Activated CD4-positive, alpha-beta memory T cell treated with anti-CD3 and anti-CD28 coated beads, Interleukin-2, amount 10 ng/mL, durations not matched to agents 7 days and 5 days (primary cell): ENCODE measurements at regions of chr16 and their contacts with region 1.

Region 1: DNA sequence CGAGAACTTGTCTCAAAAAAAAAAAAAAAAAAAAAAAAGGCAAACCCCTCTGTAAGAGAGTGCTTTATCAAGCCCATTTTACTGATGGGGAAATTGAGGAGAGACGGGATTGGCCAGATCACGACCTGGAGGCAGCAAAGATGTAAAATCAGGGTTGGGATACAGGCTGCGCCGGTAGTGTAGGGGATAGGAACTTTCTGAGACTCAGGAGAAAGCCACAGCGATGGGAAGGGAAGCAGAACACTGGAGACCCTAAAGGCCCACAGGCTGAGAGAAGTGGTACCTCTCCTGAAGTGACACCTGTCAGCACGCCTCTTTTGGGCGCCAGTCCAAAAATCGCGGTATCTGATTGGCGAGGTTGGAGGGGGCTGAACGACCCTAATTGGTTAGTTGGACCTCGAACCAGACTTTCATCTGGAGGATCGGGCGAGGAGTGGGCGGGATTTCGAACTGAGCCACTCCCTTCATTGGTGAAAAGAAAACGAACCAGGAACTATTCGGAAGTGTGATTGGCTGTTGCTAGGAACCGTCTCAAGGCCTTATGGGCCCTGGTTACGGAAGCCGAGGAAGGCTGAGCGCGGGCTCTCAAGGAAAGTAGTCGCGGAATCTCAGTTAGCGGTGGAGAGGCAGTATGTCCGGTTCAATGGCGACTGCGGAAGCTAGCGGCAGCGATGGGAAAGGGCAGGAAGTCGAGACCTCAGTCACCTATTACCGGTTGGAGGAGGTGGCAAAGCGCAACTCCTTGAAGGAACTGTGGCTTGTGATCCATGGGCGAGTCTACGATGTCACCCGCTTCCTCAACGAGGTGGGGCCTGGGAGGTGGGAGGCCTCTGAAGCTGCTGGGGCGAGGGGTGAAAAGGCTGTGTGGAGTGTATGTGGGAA is at the start of gene CYB5B:
- DNase-seq: peak; percentile 96
- H3K4me3 Mint-ChIP-seq: peak within 1 kb of the TSS; percentile 87
- H3K27ac Mint-ChIP-seq: peak within 1 kb of the TSS; percentile 84
- H3K4me1 Mint-ChIP-seq: peaks cover 40% of the 10 kb centered on the region
- H3K27me3 Mint-ChIP-seq: no peaks in the 10 kb centered on the region
- total RNA-seq, gene CYB5B: 149 to 152 TPM

Region 2: DNA sequence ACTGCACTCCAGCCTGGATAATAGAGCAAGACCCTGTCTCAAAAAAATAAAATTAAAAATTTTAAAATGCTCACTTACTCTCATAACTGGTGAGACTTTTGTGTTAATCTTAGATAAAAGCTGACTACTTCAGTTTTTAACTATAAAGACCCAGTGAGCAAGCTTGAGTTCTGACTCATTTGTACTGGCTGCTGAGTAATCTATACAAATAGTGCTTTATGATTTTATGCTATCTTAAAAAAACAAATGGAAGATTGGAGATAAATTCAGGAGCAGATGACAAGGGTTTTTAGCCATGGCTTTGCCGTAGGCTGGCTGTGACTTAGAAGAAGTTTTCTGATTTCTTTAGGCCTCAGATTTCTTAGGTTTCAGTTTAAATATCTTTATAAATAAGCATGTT is 206.9 kb before region 1 on chr16:
- CTCF ChIA-PET with region 1: no interaction called
- POLR2A ChIA-PET with region 1: no interaction called
- DNase-seq: no peak
- H3K4me3 Mint-ChIP-seq: no peak overlapping the region
- H3K27ac Mint-ChIP-seq: no peak overlapping the region
- H3K4me1 Mint-ChIP-seq: peaks cover 2% of the 10 kb centered on the region
- H3K27me3 Mint-ChIP-seq: no peaks in the 10 kb centered on the region

Region 3: GRCh38 chr16:69330286-69331109 is 93.8 kb before region 1 on chr16 and contains the start of gene PDF:
- CTCF ChIA-PET with region 1: no interaction called
- POLR2A ChIA-PET with region 1: interaction called, 11 read pairs
- DNase-seq: peak; percentile 87
- H3K4me3 Mint-ChIP-seq: peak within 1 kb of the TSS; percentile 80
- H3K27ac Mint-ChIP-seq: peak within 1 kb of the TSS; percentile 78
- H3K4me1 Mint-ChIP-seq: peaks cover 48% of the 10 kb centered on the region
- H3K27me3 Mint-ChIP-seq: no peaks in the 10 kb centered on the region
- total RNA-seq, gene PDF: 8.8 to 9.7 TPM

Region 4: DNA sequence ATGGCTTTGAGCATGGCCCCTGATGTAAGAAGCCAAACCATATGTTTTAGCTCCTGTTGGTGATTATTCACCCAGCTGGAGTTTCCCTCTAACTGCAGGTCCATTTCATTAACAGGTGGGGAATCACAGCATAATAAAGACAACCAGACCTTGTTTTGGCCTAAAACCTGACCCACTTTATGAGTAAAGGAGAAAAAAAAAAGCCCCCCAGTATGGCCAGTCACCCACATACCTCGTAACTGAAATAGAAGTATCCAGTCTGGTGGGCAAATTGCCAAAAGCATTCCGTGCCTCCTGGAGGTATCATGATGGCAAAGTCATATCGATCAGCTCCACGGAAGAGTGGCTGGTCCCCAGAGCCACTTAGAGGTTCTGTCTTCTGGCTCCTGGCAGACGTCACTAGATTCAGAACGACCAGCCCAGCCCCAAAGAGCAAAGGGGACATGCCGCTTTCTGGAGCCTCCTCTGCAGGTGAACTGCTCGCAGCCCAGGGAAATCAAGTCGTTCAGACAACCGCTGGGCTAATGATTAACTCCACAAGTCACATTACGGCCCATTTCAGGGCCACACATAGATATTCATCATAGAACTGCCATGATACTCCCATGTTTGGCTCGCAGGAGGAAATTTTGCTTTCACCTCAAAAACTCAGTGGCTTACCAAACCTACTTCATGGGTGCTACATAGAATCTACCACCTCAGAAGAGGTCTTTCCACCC is 72.8 kb before region 1 on chr16 and contains the start of gene TMED6:
- CTCF ChIA-PET with region 1: no interaction called
- POLR2A ChIA-PET with region 1: no interaction called
- DNase-seq: no peak
- H3K4me3 Mint-ChIP-seq: no peak within 1 kb of the TSS
- H3K27ac Mint-ChIP-seq: no peak within 1 kb of the TSS
- H3K4me1 Mint-ChIP-seq: peaks cover 5% of the 10 kb centered on the region
- H3K27me3 Mint-ChIP-seq: no peaks in the 10 kb centered on the region
- total RNA-seq, gene TMED6: 1.3 to 1.8 TPM

Region 5: GRCh38 chr16:69386596-69386995 is 37.7 kb before region 1 on chr16:
- CTCF ChIA-PET with region 1: no interaction called
- POLR2A ChIA-PET with region 1: interaction called, 19 read pairs
- DNase-seq: no peak
- H3K4me3 Mint-ChIP-seq: peak overlapping the region; percentile 93
- H3K27ac Mint-ChIP-seq: no peak overlapping the region
- H3K4me1 Mint-ChIP-seq: peaks cover 32% of the 10 kb centered on the region
- H3K27me3 Mint-ChIP-seq: no peaks in the 10 kb centered on the region

Region 6: DNA sequence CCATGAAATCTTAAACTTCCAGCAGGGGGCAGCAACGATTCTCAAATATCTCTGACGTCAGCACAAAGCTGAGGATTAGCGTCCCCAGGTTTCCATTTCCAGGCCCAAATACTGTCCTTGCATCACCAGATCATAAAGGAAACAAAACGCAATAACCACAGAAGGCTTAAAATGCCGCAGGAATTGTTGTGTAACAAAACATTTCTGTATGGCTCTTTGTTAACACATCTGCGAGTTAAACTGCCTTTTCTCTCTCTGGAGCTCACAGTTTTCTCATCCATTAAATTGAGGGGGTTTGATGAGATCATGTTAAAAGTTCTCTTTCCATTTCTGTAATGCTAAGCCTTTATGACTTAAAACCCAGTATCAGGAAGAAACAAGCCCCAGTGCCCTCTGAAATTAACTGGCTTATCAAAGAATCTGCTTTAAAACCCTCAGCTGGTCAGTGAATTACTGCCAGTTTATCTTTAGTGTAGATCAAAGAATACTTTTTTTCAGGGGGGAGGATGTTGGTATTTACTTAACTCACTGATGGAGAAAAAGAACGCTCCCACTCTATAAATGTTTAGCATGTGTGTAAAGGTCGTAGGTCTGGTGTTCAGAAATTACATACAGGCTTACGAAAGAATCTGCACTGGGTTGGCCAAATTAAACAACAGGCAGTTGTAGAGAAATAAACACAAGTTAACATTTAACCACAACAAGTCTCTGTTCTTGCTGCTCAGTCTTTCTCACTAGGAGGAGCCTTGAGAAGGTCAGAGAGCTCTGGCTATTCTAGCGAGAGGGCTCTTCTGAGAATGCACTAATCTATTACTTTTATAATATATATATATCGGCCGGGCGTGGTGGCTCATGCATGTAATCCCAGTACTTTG is 27.9 kb before region 1 on chr16:
- CTCF ChIA-PET with region 1: interaction called, 11 read pairs
- POLR2A ChIA-PET with region 1: interaction called, 8 read pairs
- DNase-seq: peak; percentile 69
- H3K4me3 Mint-ChIP-seq: no peak overlapping the region
- H3K27ac Mint-ChIP-seq: peak overlapping the region; percentile 7
- H3K4me1 Mint-ChIP-seq: peaks cover 14% of the 10 kb centered on the region
- H3K27me3 Mint-ChIP-seq: peaks cover 15% of the 10 kb centered on the region

Region 7: DNA sequence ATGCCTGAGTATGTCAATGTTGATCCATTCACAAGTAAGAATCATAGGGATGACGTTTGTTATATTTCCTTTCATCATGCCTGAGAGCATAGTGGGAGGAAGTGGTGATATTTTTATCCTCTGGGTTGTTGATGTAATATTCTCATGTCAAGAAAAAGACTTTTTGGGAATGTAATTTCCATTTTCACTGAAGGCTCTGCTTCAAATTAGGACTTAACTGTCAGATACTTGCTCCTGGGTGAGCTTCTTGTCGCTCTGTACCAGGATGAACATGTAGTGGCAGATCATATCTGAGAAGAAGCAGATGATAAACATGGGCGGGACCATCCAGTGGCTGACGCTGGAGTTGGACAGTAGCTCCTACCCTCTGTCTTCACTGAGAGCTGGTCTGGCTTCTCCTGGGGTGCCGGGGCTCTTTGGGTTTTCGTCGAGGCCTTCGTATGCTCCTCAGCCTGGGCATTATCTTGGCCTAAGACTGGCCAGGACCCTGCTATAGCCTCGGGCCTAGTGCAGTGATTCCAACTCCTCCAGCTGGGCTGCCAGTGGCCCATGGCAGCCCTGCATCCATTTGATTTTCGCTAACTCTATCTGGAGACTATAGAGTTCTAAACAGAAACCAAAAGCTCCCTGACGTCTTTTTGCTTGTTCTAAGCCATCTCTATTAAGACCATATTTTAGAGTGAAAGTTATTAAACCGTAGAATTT is 19.8 kb after region 1 on chr16:
- CTCF ChIA-PET with region 1: no interaction called
- POLR2A ChIA-PET with region 1: interaction called, 21 read pairs
- DNase-seq: peak; percentile 44
- H3K4me3 Mint-ChIP-seq: peak overlapping the region; percentile 73
- H3K27ac Mint-ChIP-seq: peak overlapping the region; percentile 86
- H3K4me1 Mint-ChIP-seq: peaks cover 35% of the 10 kb centered on the region
- H3K27me3 Mint-ChIP-seq: no peaks in the 10 kb centered on the region

Region 8: GRCh38 chr16:69465083-69465721 is 40.9 kb after region 1 on chr16:
- CTCF ChIA-PET with region 1: interaction called, 4 read pairs
- POLR2A ChIA-PET with region 1: interaction called, 11 read pairs
- DNase-seq: peak; percentile 25
- H3K4me3 Mint-ChIP-seq: peak overlapping the region; percentile 48
- H3K27ac Mint-ChIP-seq: peak overlapping the region; percentile 86
- H3K4me1 Mint-ChIP-seq: peaks cover 54% of the 10 kb centered on the region
- H3K27me3 Mint-ChIP-seq: no peaks in the 10 kb centered on the region

Region 9: DNA sequence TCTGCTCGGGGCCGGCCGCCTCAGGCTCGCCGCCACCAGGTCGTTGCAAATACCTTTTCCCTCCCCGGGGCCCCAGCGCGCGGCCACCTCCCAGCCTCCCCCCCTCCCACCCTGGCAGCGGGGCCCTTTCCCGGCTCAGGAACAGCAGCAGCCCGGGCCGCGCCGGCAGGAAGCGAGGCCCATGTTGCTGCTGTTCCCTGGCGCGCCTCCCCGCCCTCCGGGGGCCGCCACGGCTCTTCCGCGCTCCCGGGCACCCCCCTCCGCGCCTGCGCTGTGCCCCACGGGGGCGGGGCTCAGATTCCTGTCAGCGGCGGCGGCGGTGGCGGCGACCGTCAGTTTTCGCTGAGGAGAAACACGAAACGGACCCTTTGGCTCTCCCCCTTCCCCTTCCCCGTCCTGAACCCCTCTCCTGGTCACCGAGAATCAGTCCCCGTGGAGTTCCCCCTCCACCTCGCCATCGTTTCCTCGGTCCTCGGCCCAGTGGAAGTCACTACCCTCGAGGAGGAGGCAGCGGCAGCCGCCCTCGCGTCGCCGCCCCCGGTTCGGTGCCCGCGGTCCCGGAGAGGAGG is 141.5 kb after region 1 on chr16 and contains the start of gene NFAT5:
- CTCF ChIA-PET with region 1: interaction called, 3 read pairs
- POLR2A ChIA-PET with region 1: interaction called, 16 read pairs
- DNase-seq: peak; percentile 91
- H3K4me3 Mint-ChIP-seq: peak within 1 kb of the TSS; percentile 97
- H3K27ac Mint-ChIP-seq: peak within 1 kb of the TSS; percentile 94
- H3K4me1 Mint-ChIP-seq: peaks cover 47% of the 10 kb centered on the region
- H3K27me3 Mint-ChIP-seq: no peaks in the 10 kb centered on the region
- total RNA-seq, gene NFAT5: 19.7 to 21.3 TPM